ENCODE measurements at regions of chr12 and their contacts with region 1.

Region 1: GRCh38 chr12:6890789-6891645 is 13.6 kb upstream of the LRRC23 start:
- DNase-seq: peak; percentile 91
- H3K27ac ChIP-seq: peak overlapping the region; percentile 77
- CTCF ChIP-seq: peak; percentile 75

Region 2: DNA sequence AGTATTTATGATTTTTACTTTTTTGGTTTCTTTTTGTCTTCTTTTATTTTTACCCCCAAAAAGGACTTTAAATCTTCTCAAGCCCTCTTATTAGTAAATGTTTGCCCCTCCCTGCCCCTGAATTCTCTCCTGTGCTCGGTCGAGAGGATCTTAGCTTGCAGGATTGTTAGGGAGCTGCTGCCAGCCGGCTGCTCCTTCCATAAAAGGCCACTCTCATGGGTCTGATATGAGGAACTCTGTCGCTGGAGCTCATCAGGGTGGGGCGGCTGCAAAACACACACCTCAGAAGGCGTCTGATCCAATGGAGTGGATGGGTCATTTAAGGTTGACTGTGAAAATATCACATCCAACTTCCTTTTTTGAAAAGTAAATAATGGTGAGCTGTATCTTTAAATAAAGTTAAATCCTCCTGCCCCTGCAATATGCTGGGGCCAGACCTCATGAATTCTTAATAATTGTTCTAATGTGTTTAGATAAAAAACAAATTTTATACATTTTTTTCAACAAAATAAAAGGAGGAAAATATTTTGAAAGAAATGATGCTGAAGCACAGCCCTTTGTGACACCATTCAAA is 498.4 kb before region 1 on chr12:
- CTCF ChIA-PET with region 1: no interaction called
- POLR2A ChIA-PET with region 1: no interaction called
- DNase-seq: no peak
- H3K27ac ChIP-seq: peak overlapping the region; percentile 44
- CTCF ChIP-seq: no peak

Region 3: GRCh38 chr12:6873094-6874014 is 17.7 kb before region 1 on chr12 and contains the start of gene SPSB2:
- CTCF ChIA-PET with region 1: interaction called, 16 read pairs
- POLR2A ChIA-PET with region 1: interaction called, 9 read pairs
- DNase-seq: peak; percentile 92
- H3K27ac ChIP-seq: peak within 1 kb of the TSS; percentile 84
- CTCF ChIP-seq: no peak

Measured in RWPE1 (cell line).